ENCODE measurements at regions of chr2 and their contacts with region 1.

Region 1: GRCh38 chr2:156892467-156893281 is 364.8 kb upstream of the GALNT5 start:
- DNase-seq: no peak
- ATAC-seq: peak; percentile 72

Region 2: DNA sequence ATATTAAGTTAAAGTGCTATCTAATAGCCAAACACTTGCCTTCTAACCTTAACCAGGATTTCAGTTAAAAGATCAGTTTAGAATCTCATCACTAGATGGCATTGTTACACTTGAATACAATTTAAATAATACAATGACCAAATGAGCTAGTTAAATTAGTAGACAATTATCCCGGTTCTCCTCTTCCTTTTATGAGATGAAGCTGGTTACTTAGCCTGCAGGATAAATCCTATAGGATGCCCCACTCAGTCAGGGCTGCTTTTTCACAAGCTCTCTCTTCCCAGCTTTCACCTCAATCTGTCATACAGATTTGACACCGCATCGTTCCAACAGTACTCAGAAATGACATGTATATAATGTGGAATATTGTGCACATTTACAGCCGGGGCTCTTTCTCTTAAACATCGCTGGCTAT is 1515.4 kb before region 1 on chr2:
- intact Hi-C with region 1: loop called (anchors 5 kb)
- DNase-seq: no peak
- ATAC-seq: no peak

Region 3: GRCh38 chr2:156589381-156590079 is 303.1 kb before region 1 on chr2:
- intact Hi-C with region 1: loop called (anchors 10 kb)
- DNase-seq: no peak
- ATAC-seq: peak; percentile 37

Region 4: DNA sequence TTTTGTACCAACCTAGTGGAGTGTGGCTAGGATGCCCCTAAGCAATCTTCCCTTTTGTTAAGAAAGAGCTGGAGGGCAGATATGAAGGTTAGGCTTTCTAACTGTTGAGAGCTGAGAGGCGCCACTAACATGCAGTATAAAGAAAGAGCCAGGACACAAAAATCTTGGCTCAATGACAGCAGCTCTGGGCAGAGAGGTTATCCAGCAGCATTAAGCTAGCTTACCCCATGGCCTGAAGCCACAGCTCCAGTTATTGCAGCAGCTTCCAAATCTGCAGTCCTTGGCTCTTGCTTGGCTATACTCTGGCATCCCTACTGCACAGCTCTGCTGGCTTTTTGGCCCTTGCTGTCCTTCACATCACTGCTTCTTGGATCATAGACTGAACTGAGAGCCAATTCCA is 243.1 kb before region 1 on chr2:
- intact Hi-C with region 1: loop called (anchors 1 kb)
- DNase-seq: peak; percentile 77
- ATAC-seq: peak; percentile 99

Region 5: DNA sequence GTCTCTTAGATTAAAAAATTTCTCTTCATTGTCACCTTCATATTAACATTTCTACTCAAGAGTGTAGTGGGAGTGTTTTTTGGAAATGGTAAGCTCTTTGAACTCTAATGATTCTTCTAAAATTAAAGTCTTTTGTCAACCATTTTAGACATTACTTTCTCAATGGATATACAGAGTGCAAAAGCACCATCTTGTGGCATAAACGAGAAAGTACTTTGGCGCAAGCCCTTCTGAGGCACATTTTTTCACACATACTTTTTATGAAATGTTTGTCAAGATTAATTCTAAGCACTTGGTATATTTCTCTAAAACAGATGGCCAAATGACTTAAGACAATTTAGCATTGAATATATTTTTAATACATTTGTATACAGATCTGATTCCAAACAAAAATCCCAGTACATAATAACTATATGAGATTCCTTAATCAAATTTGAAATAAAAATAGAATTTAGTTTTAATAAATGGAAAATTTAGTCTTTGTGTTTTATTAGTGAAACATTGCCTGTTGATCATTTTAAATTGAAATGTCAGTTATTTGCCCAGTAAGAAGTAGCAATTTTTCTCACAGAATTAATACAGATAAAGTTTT is 301.5 kb after region 1 on chr2:
- intact Hi-C with region 1: loop called (anchors 10 kb)
- DNase-seq: no peak
- ATAC-seq: no peak

Measured in Right ventricle myocardium inferior (tissue), 1 donor.